Panc1 (cell line): ENCODE measurements at regions of chr1 and their contacts with region 1.

Region 1: GRCh38 chr1:78839704-78840277 is 166.7 kb downstream of the ADGRL4 start:
- DNase-seq: peak; percentile 56
- ATAC-seq: no peak
- H3K4me3 ChIP-seq: no peak overlapping the region
- H3K27ac ChIP-seq: no peak overlapping the region
- H3K4me1 ChIP-seq: peaks cover 4% of the 10 kb centered on the region
- H3K27me3 ChIP-seq: no peaks in the 10 kb centered on the region
- CTCF ChIP-seq: peak; percentile 70; the same call in 1 of the 2 replicates

Region 2: DNA sequence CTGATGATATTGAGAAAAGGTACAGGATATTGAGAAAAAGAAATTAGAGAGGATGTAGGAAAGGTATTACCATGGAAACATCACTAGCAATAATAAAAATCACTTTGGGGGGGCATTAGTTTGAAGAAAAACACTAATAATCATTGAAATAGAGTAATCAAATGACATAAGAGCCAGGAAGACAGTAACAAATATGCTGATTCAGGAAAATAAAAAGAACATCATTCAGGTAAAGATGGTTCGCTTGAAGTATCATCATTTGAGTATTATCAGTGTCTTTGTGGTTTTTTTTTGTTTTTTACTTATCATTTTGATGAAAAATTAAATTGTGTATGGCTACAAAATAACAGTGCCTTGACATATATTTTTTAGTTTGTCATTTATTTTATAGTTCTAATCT is 25.6 kb before region 1 on chr1:
- CTCF ChIA-PET with region 1: no interaction called
- POLR2A ChIA-PET with region 1: no interaction called
- in situ Hi-C with region 1: no loop called
- intact Hi-C with region 1: no loop called
- DNase-seq: no peak
- ATAC-seq: no peak
- H3K4me3 ChIP-seq: no peak overlapping the region
- H3K27ac ChIP-seq: no peak overlapping the region
- H3K4me1 ChIP-seq: no peaks in the 10 kb centered on the region
- H3K27me3 ChIP-seq: no peaks in the 10 kb centered on the region
- CTCF ChIP-seq: no peak

Region 3: DNA sequence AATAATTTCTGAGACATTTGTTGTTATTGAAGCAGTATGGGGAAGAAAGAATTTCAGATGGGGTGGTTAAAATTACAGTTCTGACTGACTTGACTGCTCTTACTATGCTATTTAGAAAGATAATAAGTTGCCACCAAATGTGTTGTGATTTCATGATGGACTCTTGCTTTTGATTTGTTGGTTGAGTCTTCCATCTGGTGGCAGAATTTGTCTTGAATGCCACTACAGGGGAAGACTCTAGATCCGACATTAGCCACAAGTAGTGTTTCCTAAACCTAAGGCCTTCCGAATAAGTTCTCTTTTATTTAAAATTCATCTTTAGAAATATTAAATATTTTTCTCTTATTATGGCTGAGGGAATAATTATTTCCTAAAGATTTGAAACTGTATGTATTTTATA is 357.6 kb after region 1 on chr1:
- CTCF ChIA-PET with region 1: no interaction called
- POLR2A ChIA-PET with region 1: no interaction called
- in situ Hi-C with region 1: no loop called
- intact Hi-C with region 1: loop called (anchors 1 kb)
- DNase-seq: peak; percentile 64
- ATAC-seq: no peak
- H3K4me3 ChIP-seq: no peak overlapping the region
- H3K27ac ChIP-seq: no peak overlapping the region
- H3K4me1 ChIP-seq: no peaks in the 10 kb centered on the region
- H3K27me3 ChIP-seq: no peaks in the 10 kb centered on the region
- CTCF ChIP-seq: peak; percentile 25; the same call in 1 of the 2 replicates

Region 4: GRCh38 chr1:79323240-79324025 is 483.6 kb after region 1 on chr1:
- CTCF ChIA-PET with region 1: no interaction called
- POLR2A ChIA-PET with region 1: no interaction called
- in situ Hi-C with region 1: no loop called
- intact Hi-C with region 1: no loop called
- DNase-seq: peak; percentile 85
- ATAC-seq: no peak; the same call in 1 of the 2 replicates
- H3K4me3 ChIP-seq: no peak overlapping the region
- H3K27ac ChIP-seq: no peak overlapping the region
- H3K4me1 ChIP-seq: no peaks in the 10 kb centered on the region
- H3K27me3 ChIP-seq: no peaks in the 10 kb centered on the region
- CTCF ChIP-seq: no peak

Region 5: DNA sequence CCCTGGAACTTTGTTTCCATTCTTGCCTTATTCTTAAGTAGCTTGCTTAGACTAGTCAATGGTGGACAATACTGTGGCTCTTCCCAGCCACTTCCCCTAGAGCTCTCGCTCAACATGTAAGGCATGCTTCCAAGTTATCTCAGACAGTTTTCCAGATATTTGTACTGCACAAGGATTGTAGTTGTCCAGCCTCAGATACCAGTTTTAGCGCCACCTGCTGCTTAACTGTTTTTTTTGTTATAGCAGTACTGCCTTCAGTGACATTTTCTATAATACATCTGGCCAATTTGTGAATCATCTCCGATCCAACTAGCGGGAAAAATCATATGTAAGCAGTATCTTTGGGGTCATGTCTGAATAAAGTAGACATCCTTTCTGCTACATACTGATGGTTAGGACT is 513.4 kb after region 1 on chr1:
- CTCF ChIA-PET with region 1: no interaction called
- POLR2A ChIA-PET with region 1: no interaction called
- in situ Hi-C with region 1: no loop called
- intact Hi-C with region 1: loop called (anchors 5 kb)
- DNase-seq: no peak
- ATAC-seq: peak; percentile 45; the same call in 1 of the 2 replicates
- H3K4me3 ChIP-seq: no peak overlapping the region
- H3K27ac ChIP-seq: no peak overlapping the region
- H3K4me1 ChIP-seq: no peaks in the 10 kb centered on the region
- H3K27me3 ChIP-seq: no peaks in the 10 kb centered on the region
- CTCF ChIP-seq: peak; percentile 55